CD8-positive, alpha-beta T cell (primary cell): ENCODE measurements at regions of chr1 and their contacts with region 1.

Region 1: DNA sequence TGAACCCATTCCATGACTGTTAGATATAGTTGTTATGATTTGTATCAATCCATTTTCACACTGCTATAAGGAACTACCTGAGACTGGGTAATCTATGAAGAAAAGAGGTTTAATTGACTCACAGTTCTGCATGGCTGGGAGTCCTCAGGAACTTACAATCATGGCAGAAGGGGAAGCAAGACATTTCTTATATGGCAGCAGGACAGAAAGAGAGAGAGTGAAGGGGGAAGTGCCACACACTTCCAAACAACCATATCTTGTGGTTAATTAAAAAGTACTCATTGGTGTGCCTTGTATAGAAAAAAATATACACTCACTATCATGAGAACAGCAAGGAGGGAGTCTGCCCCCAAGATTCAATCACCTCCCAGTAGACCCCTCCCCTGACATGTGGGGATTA is 137.6 kb upstream of the NBPF11 start:
- DNase-seq: no peak
- ATAC-seq: no peak
- H3K4me3 ChIP-seq: no peak overlapping the region
- H3K4me3 Mint-ChIP-seq: no peak overlapping the region
- H3K27ac ChIP-seq: no peak overlapping the region
- H3K27ac Mint-ChIP-seq: no peak overlapping the region
- H3K4me1 ChIP-seq: no peaks in the 10 kb centered on the region
- H3K4me1 Mint-ChIP-seq: no peaks in the 10 kb centered on the region
- H3K27me3 ChIP-seq: no peaks in the 10 kb centered on the region
- H3K27me3 Mint-ChIP-seq: peaks cover 13% of the 10 kb centered on the region
- CTCF ChIP-seq: no peak

Region 2: DNA sequence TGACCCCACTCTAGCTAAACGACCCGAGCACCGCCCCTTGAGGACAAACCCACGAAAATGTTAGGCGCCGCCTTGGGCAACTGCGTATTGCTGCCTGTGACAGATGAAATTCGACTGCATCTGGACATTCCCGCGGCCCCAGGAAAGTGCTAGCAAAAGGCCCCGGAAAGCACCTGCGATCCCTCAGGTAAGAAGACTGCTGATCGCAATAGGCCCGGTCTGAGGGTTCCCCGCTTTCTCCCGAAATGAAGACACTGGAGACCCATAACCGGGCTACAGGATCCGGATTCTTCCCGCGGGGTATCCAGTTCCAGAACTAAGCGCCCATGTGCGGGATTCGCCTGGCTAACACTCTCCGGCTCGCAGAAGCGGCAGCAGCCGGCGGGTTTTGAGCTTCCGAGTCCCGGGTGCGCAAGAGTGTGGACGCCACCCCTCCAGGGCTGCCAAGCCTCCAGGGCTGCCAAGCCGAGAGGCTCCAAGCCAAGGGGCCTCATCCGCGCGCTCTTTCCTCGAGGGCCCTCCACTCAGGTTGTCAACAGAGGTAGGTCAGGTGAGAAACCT is 20.4 kb after region 1 on chr1:
- CTCF ChIA-PET with region 1: no interaction called
- POLR2A ChIA-PET with region 1: no interaction called
- intact Hi-C with region 1: loop called in 1 of 2 experiments (anchors 2 kb)
- DNase-seq: no peak
- ATAC-seq: no peak
- H3K4me3 ChIP-seq: no peak overlapping the region
- H3K4me3 Mint-ChIP-seq: no peak overlapping the region
- H3K27ac ChIP-seq: no peak overlapping the region
- H3K27ac Mint-ChIP-seq: no peak overlapping the region
- H3K4me1 ChIP-seq: no peaks in the 10 kb centered on the region
- H3K4me1 Mint-ChIP-seq: peaks cover 12% of the 10 kb centered on the region
- H3K27me3 ChIP-seq: peaks cover 14 to 16% of the 10 kb centered on the region in 2 experiments
- H3K27me3 Mint-ChIP-seq: peaks cover 60% of the 10 kb centered on the region
- CTCF ChIP-seq: no peak

Region 3: DNA sequence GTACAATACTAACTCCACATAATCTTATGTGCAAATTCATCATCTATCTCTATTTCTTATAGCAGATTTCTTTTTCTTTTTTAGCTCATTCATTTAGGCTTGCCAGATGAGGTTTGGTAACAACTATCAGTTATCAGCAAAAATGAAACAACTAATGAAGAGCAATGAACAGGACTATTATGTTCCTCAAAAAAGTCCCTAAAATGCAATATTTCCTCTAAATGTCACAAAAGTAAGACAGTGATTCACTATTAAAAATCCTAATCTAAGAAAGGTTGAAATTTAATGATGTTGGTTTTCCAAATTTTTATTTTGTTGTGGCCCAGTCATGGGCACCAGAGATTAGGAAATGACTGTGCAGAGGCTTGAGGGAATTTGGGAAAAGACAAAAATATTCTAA is 58.1 kb after region 1 on chr1:
- CTCF ChIA-PET with region 1: no interaction called
- POLR2A ChIA-PET with region 1: no interaction called
- intact Hi-C with region 1: loop called in 1 of 2 experiments (anchors 10 kb)
- DNase-seq: no peak
- ATAC-seq: no peak
- H3K4me3 ChIP-seq: no peak overlapping the region
- H3K4me3 Mint-ChIP-seq: no peak overlapping the region
- H3K27ac ChIP-seq: no peak overlapping the region
- H3K27ac Mint-ChIP-seq: no peak overlapping the region
- H3K4me1 ChIP-seq: no peaks in the 10 kb centered on the region
- H3K4me1 Mint-ChIP-seq: peaks cover 7% of the 10 kb centered on the region
- H3K27me3 ChIP-seq: peaks cover 0 to 9% of the 10 kb centered on the region in 2 experiments
- H3K27me3 Mint-ChIP-seq: peaks cover 36% of the 10 kb centered on the region
- CTCF ChIP-seq: no peak